Right ventricle myocardium inferior (tissue), 1 donor: ENCODE measurements at regions of chr3 and their contacts with region 1.

Region 1: DNA sequence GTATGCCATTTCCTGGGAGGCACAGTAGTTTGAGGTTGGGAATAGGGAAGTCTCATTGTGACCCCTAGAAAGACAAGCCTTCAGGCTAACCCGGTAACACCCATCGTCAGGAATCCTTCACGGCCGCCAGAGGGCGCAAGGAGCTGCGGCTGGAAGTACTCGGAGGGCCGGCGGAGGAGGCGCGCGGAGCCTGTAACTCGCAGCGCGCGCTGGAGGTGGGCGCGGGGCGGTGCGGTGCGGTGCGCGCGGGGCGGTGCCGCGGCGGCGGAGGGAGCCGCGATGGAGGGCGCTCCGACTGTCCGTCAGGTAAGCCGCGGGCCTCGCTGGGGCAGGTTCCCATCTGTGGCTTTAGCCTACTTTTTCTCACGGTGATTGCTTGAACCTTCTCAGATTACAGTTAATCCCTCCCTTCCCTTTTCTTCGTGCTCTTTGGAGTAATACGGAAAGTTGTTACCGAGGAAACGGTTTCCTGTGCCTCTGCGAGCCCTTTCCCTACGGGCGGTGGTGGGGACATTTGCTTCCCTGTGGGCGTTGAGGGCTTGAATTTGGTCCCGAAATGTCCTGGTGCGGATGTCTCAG is at the start of gene GRAMD1C:
- DNase-seq: peak; percentile 94
- ATAC-seq: peak; percentile 96
- total RNA-seq, gene GRAMD1C: 2.4 TPM

Region 2: DNA sequence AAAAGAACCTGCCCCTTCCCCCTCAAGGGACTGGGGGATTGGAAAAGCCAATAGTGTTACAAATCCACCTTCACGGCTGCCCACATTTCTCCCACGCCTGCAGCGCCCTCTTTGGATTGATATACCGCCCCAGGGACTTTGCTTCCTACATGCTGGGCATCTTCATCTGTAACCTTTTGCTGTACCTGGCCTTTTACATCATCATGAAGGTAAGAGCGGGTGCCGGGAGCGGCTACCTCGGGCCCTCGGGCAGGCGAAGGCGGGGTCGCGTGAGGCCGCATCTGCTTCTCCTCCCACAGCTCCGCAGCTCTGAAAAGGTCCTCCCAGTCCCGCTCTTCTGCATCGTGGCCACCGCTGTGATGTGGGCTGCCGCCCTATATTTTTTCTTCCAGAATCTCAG is 215.4 kb before region 1 on chr3:
- intact Hi-C with region 1: no loop called
- DNase-seq: no peak
- ATAC-seq: no peak

Region 3: GRCh38 chr3:113736548-113737089 is 102.1 kb before region 1 on chr3:
- intact Hi-C with region 1: loop called (anchors 2 kb)
- DNase-seq: no peak
- ATAC-seq: peak; percentile 78

Region 4: DNA sequence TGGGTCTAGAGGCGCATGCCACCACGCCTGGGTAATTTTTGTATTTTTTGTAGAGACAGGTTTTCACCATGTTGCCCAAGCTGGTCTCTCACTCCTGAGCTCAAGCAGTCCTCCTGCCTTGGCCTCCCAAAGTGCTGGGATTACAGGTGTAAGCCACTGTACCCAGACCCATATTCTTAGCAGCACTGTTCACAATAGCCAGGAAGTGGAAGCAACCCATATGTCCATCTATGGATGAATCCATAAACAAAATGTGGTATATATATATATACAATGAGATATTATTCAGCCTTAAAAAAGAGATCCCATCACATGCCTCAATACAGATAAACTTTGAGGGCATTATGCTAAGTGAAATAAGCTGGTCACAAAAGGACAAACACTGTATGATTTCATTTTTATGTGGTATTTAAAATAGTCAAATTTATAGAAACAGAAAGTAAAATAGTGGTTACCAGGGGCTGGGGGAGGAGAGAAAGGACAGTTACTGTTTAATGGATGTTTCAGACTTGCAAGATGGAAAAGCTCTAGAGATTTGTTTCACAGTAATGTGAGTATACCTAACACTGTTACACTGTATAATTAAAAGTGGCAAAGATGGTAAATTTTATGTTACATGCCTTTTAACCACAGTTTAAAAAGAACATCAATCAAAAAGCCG is 35.8 kb before region 1 on chr3:
- intact Hi-C with region 1: no loop called
- DNase-seq: no peak
- ATAC-seq: no peak

Region 5: DNA sequence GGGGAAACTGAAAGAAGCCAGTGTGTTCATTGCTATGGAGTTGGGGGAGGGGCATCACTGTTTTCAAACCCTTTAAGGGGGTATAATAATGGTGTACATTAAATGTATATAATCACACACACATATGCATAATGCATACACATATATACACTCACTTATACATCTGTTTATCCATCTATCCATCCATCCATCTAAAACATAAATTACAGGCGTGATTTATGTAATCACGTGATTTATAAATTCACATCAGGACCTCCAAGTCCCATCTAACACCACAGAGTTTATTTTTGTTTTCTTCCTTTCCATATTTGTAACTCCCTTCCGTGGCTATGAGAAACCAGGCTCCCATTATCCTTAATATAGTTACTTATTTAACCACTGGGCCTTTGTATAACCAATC is 39.7 kb after region 1 on chr3:
- intact Hi-C with region 1: no loop called
- DNase-seq: no peak
- ATAC-seq: no peak

Region 6: DNA sequence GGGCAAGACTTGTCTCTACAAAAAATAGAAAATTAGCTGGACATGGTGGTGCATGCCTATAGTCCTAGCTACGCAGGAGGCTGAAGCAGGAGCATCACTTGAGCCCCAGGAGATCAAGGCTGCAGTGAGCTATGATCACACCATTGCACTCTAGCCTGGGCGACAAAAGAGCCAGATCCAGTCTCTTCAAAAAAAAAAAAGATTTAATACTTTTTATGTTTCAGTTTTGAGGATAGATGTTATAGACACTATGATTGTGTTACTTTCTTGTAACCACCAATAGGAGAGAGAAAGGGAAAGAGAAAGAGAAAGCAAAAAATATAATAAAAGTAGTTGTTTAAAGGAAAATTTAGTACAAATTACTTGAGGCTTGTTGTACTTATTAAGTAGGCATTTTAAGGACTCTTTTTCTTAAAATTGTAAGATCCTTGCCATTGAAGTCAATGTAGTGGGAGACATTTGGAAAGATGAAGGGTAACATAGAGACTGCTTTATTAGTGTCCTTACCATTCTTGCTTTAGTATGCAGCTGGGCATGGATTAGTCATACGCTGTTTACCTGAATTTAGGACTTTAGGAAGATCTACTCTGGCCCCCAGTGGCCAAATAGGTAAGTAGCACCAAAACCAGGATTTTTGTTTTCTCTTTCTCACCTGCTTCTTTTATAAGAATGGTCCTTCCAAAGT is 74.0 kb after region 1 on chr3:
- intact Hi-C with region 1: loop called (anchors 5 kb)
- DNase-seq: no peak
- ATAC-seq: no peak